Breast epithelium (tissue), 4 donors: ENCODE measurements at regions of chr7 and their contacts with region 1.

Region 1: DNA sequence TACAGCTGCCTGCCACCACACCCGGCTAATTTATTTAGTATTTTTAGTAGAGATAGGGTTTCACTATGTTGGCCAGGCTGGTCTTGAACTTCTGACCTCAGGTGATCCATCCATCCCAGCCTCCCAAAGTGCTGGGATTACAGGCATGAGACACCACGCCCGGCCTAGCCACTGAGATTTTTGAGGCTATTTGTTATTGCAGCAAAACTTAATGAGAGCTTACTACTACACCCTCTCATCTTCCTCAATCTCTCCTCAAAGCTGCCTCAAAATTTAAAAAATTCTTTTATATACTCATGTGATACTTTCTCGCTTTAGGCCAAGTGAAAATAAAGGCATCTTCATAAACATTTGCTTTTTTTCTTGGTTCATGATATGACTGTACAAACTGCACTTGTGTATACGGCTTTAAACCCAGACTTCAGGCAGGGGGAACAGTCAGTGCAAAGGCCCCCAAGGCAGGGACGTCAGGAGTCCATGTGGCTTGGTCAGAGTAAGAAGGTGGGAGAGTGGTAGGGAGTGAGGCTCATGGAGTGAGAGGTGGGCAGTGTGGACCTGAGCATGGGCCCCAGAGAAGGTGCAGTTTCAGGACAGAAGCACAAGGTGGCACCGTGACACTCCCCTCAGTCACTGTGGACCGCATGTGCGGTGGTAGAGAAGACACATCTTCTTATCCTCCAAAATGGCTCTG is 55.5 kb downstream of the SYPL1 start:
- DNase-seq: peak; percentile 67 to 70
- H3K4me3 ChIP-seq: no peak overlapping the region
- H3K27ac ChIP-seq: no peak overlapping the region
- H3K4me1 ChIP-seq: peaks cover 0 to 13% of the 10 kb centered on the region in 2 donors
- H3K27me3 ChIP-seq: no peaks in the 10 kb centered on the region
- CTCF ChIP-seq: peak; percentile 83 to 93 (median 84)
- POLR2A ChIP-seq: no peak

Region 2: GRCh38 chr7:105996860-105997737 is 59.6 kb before region 1 on chr7:
- intact Hi-C with region 1: no loop called
- DNase-seq: peak in 1 of 2 donors; percentile 28
- H3K4me3 ChIP-seq: no peak overlapping the region
- H3K27ac ChIP-seq: no peak overlapping the region
- H3K4me1 ChIP-seq: no peaks in the 10 kb centered on the region
- H3K27me3 ChIP-seq: no peaks in the 10 kb centered on the region
- CTCF ChIP-seq: no peak
- POLR2A ChIP-seq: no peak

Region 3: DNA sequence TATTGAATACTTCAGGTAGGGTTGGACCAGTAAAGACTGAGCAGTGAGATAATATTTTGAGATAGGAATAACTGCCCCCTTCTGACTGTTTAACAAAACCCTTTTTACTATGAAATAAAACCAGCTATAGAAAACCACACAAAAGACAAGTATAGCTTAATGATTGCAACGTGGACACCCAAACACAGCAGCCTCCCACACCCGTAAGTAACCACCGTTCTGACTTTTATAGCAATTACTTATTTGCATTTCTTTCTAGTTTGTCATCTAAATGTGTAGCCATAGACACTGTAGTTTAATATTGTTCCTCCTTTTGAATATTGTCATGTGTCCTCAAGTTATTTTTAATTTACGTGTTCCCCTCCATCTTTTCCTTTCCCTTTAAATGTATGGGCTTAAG is 98.4 kb after region 1 on chr7:
- intact Hi-C with region 1: loop called (anchors 5 kb)
- DNase-seq: no peak
- H3K4me3 ChIP-seq: no peak overlapping the region
- H3K27ac ChIP-seq: no peak overlapping the region
- H3K4me1 ChIP-seq: peaks cover 0 to 11% of the 10 kb centered on the region in 2 donors
- H3K27me3 ChIP-seq: no peaks in the 10 kb centered on the region
- CTCF ChIP-seq: no peak
- POLR2A ChIP-seq: no peak